ENCODE measurements at regions of chr14 and their contacts with region 1.

Region 1: DNA sequence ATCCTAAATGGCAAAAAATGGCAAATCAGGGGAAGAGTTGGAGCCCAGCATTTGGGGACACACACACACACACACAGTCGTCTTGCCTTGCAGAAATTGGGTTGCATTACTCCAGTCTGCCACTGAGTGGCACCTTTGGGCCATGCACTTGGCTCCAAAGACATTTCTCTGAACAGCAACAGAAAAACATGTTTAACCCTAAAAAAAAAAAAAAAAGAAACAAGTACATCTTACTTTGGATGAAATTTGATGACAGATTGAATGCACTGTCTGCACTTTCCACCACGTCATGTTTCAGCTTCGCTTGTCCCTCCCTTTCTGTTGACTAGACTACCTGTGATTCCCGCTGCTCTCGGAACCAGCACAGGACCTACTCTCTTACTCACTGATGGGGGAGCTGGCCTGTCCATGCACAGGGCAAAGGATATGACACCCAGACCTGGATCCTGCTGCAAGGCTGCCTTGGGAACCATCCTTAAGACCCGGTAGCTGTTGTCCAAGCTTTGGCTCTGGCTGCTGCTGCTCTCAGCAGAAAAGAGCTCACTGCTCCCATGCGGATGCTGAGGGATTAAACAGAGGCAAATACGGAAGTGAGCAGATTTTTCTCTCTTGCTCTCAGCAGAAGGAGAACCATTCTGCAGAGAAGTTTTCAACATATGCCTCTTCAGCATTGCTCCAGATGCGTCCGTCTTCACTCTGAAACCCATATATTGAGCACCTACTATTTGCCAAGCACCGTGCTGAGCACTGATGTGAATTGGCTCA is 376.8 kb downstream of the DPF3 start:
- DNase-seq: no peak
- ATAC-seq: peak; percentile 78 to 81
- H3K4me3 ChIP-seq: no peak overlapping the region
- H3K27ac ChIP-seq: no peak overlapping the region
- H3K4me1 ChIP-seq: peaks cover 18% of the 10 kb centered on the region
- H3K27me3 ChIP-seq: no peaks in the 10 kb centered on the region
- CTCF ChIP-seq: peak; percentile 78

Region 2: DNA sequence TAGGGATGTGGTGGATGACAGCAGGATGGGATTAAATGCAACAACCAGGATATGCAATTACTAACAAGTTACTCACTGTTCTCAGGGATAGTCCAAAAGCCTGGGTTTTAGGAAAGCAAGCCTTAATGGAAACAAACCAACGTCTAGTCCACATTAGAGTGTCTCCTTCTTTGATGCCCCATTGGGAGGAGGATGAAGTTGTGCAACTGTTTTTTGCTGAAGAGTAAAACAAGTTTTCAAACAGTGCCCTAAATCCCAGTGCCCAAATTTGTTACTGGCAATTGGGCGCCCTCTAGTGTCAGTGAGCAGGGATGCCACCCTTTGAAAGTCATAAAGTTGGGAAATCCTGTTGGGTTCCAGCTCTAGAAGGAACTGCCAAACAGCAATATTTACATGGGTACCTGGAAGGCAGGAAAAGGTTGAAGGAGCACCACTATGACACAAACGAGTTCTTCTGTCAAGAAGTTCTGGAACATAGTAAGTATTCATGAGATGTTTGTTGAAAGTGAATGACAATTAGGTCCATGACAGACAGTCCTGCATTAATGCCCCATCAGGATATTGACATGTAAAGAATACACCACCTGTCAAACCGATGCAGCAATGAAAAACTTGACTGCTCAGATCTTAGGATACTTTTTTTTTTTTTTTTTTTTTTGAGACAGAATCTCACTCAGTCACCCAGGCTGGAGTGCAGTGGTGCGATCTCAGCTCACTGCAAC is 387.9 kb after region 1 on chr14:
- intact Hi-C with region 1: loop called (anchors 5 kb)
- DNase-seq: peak; percentile 52
- ATAC-seq: peak; percentile 80 to 85
- H3K4me3 ChIP-seq: no peak overlapping the region
- H3K27ac ChIP-seq: no peak overlapping the region
- H3K4me1 ChIP-seq: no peaks in the 10 kb centered on the region
- H3K27me3 ChIP-seq: peaks cover 7% of the 10 kb centered on the region
- CTCF ChIP-seq: peak; percentile 93

Region 3: DNA sequence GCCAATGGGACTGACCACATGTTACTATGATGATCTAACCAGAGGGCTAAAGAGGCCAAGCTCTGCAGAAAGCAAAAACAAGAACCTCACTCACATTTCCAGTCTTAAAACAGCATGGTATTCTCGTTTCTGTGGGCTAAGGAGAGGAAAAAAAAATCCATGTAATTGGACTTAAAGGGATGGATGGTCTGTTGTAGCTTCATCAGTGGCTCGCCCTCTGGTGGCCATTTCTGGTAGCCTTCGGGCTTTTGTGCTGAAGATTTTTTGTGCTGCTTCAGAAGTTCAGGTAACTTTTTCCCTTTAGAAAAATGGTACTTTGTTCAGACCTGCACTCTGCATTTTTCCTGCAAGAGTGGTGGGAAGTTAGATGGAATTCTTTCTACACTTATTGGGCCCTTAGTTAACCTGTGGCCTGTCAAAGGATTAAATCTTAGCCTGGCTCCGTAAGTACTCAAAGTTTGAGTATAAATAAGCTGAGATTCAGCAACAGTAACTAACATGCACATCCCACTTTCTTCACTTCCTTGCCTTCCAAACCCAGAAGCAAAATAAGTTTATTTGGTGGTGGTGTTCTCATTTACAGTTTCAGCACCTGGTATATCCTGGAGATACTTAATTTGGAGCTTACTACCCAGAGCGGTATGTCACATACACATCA is 431.5 kb after region 1 on chr14:
- intact Hi-C with region 1: loop called (anchors 5 kb)
- DNase-seq: peak; percentile 67
- ATAC-seq: peak in 1 of 2 donors; percentile 52
- H3K4me3 ChIP-seq: no peak overlapping the region
- H3K27ac ChIP-seq: no peak overlapping the region
- H3K4me1 ChIP-seq: no peaks in the 10 kb centered on the region
- H3K27me3 ChIP-seq: no peaks in the 10 kb centered on the region
- CTCF ChIP-seq: peak; percentile 87